ENCODE measurements at regions of chr11 and their contacts with region 1.

Region 1: GRCh38 chr11:128552783-128553661 is 34.3 kb downstream of the ETS1 start:
- H3K4me3 Mint-ChIP-seq: peak overlapping the region; percentile 49
- H3K27ac Mint-ChIP-seq: peak overlapping the region; percentile 78
- H3K4me1 Mint-ChIP-seq: peaks cover 54% of the 10 kb centered on the region
- H3K27me3 Mint-ChIP-seq: peaks cover 13% of the 10 kb centered on the region

Region 2: GRCh38 chr11:128522055-128522942 is 30.7 kb before region 1 on chr11:
- intact Hi-C with region 1: loop called (anchors 2 kb)
- H3K4me3 Mint-ChIP-seq: peak overlapping the region; percentile 86
- H3K27ac Mint-ChIP-seq: peak overlapping the region; percentile 88
- H3K4me1 Mint-ChIP-seq: peaks cover 35% of the 10 kb centered on the region
- H3K27me3 Mint-ChIP-seq: peaks cover 12% of the 10 kb centered on the region

Region 3: DNA sequence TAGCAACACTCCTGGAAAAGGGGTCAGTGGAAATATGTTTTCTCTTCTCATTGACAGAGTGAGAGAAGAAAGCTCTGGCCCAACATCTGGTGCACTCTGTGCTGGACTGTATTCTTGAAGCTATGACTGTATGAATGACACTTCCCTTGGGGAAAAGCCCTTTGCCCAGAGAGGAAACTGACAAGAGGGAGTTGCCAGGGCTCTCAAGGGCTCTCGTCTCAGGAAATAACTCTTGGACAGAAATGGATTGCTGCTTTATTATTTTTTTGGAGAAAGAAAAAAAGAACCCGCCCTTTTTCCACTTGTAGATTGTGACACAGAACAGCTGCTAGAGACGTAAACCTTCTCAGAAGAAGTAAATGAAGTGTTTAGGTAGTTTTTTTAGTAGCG is 22.9 kb after region 1 on chr11:
- intact Hi-C with region 1: loop called (anchors 1 kb)
- H3K4me3 Mint-ChIP-seq: no peak overlapping the region
- H3K27ac Mint-ChIP-seq: no peak overlapping the region
- H3K4me1 Mint-ChIP-seq: peaks cover 38% of the 10 kb centered on the region
- H3K27me3 Mint-ChIP-seq: peaks cover 2% of the 10 kb centered on the region